Esophagus muscularis mucosa (tissue), 4 donors: ENCODE measurements at regions of chr12 and their contacts with region 1.

Region 1: DNA sequence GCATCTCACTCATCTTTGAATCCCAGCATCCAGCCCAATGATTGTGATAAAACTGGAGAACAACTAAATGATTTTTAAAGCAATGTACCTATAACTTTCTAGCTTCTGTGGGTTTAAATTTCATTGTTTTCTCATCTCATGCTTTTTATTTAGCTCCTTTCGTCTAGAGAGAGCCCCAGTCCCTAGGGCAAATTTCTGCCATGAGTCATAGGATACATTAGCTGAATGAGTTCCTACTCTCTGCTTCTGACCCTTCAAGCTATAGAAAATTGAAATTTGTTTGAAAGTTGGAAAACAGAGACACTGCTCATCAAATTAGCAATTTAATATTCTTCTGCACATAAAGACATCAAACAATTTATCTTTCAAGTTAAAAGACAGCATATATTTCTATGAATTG is 113.9 kb downstream of the KIF21A start:
- DNase-seq: no peak
- H3K4me3 ChIP-seq: no peak overlapping the region
- H3K27ac ChIP-seq: no peak overlapping the region
- H3K4me1 ChIP-seq: peaks cover 0 to 11% (median 0%) of the 10 kb centered on the region in 4 donors
- H3K27me3 ChIP-seq: no peaks in the 10 kb centered on the region
- CTCF ChIP-seq: no peak
- EP300 ChIP-seq: no peak
- POLR2A ChIP-seq: no peak

Region 2: DNA sequence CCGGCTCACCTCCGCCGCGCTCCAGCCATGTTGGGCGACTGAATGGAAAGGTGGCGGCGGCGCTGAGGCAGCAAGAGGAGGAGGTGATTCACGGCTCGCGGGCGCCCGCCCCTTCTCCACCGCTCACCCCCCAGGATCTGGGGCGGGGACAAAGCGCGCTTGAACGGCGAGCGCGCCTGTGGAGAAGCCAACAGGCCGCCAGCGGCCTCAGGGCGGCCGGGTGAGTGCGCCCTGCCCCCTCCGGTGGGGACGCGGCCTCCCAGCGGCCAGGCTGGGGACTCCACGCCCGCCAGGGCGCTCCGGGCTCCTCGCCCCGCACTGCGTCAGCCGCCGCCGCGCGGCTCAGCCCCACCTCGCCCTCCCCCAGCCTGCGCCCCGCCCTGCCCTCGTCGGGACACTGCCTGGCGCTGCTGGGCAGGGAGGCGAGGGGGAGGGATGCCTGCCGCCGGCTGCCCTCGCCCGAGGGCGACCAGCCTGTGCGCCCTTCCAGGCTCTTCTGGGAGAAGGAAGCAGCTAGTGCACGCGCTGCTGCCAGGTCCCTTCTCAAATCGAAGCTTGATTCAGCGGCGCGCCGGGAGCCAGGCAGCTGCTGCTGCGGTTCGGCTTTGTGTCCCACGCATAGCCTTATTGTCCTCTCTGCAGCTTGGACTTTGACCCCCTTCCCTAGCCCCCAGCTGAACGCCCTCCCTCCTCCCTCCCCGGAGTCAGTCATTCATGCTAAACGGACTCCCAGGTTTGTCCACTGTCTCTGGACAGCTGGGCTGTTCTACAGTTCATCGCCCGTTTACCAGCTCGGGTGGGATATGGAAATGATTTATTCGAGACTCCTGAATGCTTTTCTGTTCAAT is 114.3 kb after region 1 on chr12 and contains the start of gene KIF21A:
- intact Hi-C with region 1: loop called (anchors 10 kb)
- DNase-seq: peak; percentile 95
- H3K4me3 ChIP-seq: peak within 1 kb of the TSS; percentile 84 to 98 (median 94)
- H3K27ac ChIP-seq: peak within 1 kb of the TSS; percentile 87 to 93 (median 88)
- H3K4me1 ChIP-seq: peaks cover 12 to 28% (median 25%) of the 10 kb centered on the region in 4 donors
- H3K27me3 ChIP-seq: no peaks in the 10 kb centered on the region
- CTCF ChIP-seq: peak; percentile 42 to 93 (median 47)
- EP300 ChIP-seq: no peak
- POLR2A ChIP-seq: peak; percentile 44
- total RNA-seq, gene KIF21A: 9.3 to 17.4 (median 11.1) TPM

Region 3: DNA sequence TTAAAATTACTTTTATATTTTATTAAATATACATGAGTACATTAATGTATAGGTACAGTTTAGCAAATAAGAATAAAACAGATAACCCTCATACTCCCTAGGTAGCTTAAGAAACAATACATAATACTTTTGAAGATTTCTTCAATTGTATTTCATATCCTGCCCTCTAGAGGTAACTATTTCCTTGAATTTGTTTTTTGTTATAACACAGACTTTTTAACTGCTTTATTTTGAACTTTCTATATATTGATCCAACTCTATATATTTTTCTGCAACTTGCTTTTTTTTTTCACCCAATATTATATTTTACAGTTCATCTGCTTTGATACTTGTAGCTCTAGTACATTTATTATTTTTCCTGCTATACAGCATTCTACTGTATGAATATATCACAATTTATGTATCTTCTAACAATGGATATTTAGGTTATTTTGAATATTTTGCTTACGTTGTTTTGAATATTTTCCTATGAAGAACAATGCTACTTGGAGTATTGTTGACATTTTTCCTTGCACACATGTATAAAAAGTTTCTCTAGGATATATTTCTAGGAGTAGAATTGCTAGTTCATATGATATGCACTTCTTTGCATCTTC is 363.3 kb after region 1 on chr12:
- intact Hi-C with region 1: loop called (anchors 10 kb)
- DNase-seq: no peak
- H3K4me3 ChIP-seq: no peak overlapping the region
- H3K27ac ChIP-seq: no peak overlapping the region
- H3K4me1 ChIP-seq: no peaks in the 10 kb centered on the region
- H3K27me3 ChIP-seq: no peaks in the 10 kb centered on the region
- CTCF ChIP-seq: peak in 2 of 3 experiments; percentile 44 to 53
- EP300 ChIP-seq: no peak
- POLR2A ChIP-seq: no peak